ENCODE measurements at regions of chr3 and their contacts with region 1.

Region 1: DNA sequence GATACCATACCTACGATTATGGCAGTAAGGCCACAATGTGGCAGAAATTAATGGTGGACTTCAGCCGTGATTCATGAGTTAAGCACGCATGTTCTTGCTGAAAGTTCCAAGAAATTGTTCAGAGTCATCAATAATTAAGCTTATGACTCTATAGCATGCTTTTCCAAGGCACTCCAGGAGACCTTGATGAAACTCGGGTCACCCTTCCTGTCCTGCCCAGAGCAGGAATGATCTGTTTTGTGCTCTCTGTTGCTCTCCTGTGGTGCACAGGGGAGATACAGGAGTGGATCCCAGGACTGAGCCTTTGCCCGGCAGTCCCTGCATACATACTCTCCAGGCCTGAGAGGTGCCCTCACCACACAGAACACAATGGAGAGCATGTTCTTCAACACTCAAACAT is 141.6 kb upstream of the SLC2A2 start:
- DNase-seq: peak; percentile 76
- H3K4me3 Mint-ChIP-seq: no peak overlapping the region
- H3K27ac Mint-ChIP-seq: peak overlapping the region; percentile 34
- H3K4me1 Mint-ChIP-seq: peaks cover 59% of the 10 kb centered on the region
- H3K27me3 Mint-ChIP-seq: no peaks in the 10 kb centered on the region
- CTCF ChIP-seq: peak; percentile 79

Region 2: GRCh38 chr3:171049861-171050444 is 118.1 kb before region 1 on chr3:
- CTCF ChIA-PET with region 1: interaction called, 11 read pairs
- intact Hi-C with region 1: loop called (anchors 1 kb)
- DNase-seq: peak; percentile 80
- H3K4me3 Mint-ChIP-seq: no peak overlapping the region
- H3K27ac Mint-ChIP-seq: peak overlapping the region; percentile 11
- H3K4me1 Mint-ChIP-seq: peaks cover 28% of the 10 kb centered on the region
- H3K27me3 Mint-ChIP-seq: no peaks in the 10 kb centered on the region
- CTCF ChIP-seq: peak; percentile 90

Region 3: GRCh38 chr3:171459942-171460724 is 292.0 kb after region 1 on chr3 and contains the start of gene TNIK:
- CTCF ChIA-PET with region 1: no interaction called
- intact Hi-C with region 1: no loop called
- DNase-seq: peak; percentile 96
- H3K4me3 Mint-ChIP-seq: peak within 1 kb of the TSS; percentile 97
- H3K27ac Mint-ChIP-seq: peak within 1 kb of the TSS; percentile 85
- H3K4me1 Mint-ChIP-seq: peaks cover 45% of the 10 kb centered on the region
- H3K27me3 Mint-ChIP-seq: no peaks in the 10 kb centered on the region
- CTCF ChIP-seq: peak; percentile 61
- total RNA-seq, gene TNIK: 17.6 and 19.7 TPM in 2 replicates